Activated CD8-positive, alpha-beta memory T cell treated with anti-CD3 and anti-CD28 coated beads, Interleukin-2, amount 10 ng/mL, durations not matched to agents 7 days and 5 days (primary cell): ENCODE measurements at regions of chr17 and their contacts with region 1.

Region 1: GRCh38 chr17:50169121-50169764 is 3.4 kb downstream of the SGCA start:
- DNase-seq: peak; percentile 75
- ATAC-seq: peak; percentile 74
- H3K4me3 Mint-ChIP-seq: peak overlapping the region; percentile 11
- H3K27ac Mint-ChIP-seq: peak overlapping the region; percentile 47
- H3K4me1 Mint-ChIP-seq: peaks cover 22% of the 10 kb centered on the region
- H3K27me3 Mint-ChIP-seq: no peaks in the 10 kb centered on the region

Region 2: GRCh38 chr17:49968380-49969133 is 200.7 kb before region 1 on chr17:
- CTCF ChIA-PET with region 1: no interaction called
- DNase-seq: peak; percentile 84
- ATAC-seq: peak; percentile 79
- H3K4me3 Mint-ChIP-seq: peak overlapping the region; percentile 76
- H3K27ac Mint-ChIP-seq: peak overlapping the region; percentile 50
- H3K4me1 Mint-ChIP-seq: peaks cover 34% of the 10 kb centered on the region
- H3K27me3 Mint-ChIP-seq: peaks cover 92% of the 10 kb centered on the region

Region 3: DNA sequence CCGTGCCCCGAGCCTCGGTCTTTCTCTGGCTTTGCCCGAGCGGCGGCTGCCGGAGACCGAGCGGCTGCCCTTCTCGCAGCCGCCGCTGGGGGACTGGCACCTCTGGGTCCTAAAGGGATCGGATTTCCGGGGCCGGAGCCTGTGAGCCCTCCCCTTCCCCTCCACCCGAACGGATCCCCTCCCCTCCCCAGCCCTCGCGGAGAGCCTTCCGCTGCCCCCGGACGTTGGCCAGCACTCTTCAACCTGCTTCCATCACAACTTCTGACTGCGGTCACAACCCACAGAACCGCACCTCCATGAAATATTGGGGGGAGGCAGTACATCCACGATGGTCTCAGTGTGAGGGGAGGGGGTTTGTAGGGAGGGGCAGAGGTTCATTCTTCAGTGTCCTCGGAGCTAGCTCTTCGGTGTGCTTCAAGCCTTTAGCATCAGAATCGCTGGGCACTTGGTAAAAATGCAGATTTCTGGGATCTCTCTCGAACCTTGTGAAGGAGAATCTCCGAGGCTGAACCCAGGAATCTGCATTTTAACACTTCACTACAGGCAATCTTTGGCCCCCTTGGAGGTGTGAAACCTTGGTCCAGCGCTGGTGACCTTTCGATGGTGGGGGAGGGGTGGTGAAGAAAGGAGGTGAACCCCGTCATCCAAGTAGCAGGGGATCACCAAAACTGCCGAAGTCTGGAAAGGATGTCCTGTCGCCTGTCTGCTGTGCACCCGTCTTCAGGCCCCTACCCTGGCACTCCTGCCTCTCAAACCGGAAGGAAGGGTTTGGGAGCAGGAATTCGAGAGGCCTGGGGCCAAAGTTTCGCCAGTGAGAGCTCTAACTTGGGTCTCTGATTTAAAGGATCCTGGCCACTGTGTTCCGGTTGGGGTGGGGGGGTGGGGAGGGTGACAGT is 18.0 kb before region 1 on chr17:
- CTCF ChIA-PET with region 1: interaction called, 23 read pairs
- DNase-seq: peak; percentile 96
- ATAC-seq: peak; percentile 81
- H3K4me3 Mint-ChIP-seq: peak overlapping the region; percentile 80
- H3K27ac Mint-ChIP-seq: peak overlapping the region; percentile 96
- H3K4me1 Mint-ChIP-seq: peaks cover 43% of the 10 kb centered on the region
- H3K27me3 Mint-ChIP-seq: no peaks in the 10 kb centered on the region

Region 4: GRCh38 chr17:50206604-50207293 is 37.5 kb after region 1 on chr17:
- CTCF ChIA-PET with region 1: interaction called, 77 read pairs
- DNase-seq: no peak
- ATAC-seq: no peak
- H3K4me3 Mint-ChIP-seq: no peak overlapping the region
- H3K27ac Mint-ChIP-seq: no peak overlapping the region
- H3K4me1 Mint-ChIP-seq: no peaks in the 10 kb centered on the region
- H3K27me3 Mint-ChIP-seq: peaks cover 79% of the 10 kb centered on the region

Region 5: DNA sequence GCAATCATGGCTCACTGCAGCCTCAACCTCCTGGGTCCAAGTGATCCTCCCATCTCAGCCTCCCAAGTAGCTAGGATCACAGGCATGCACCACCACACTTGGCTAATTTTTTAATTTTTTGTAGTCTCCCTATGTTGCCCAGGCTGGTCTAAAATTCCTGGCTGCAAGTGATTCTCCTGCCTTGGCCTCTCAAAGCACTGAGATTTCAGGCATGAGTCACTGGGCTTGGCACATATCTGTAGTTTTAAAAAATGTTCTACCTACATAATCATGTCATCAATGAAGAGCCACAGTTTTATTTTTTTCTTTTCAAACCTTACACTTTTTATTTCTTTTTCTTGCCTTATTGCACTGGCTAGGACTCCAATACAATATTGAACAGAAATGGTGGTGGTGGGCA is 65.3 kb after region 1 on chr17:
- CTCF ChIA-PET with region 1: no interaction called
- DNase-seq: no peak
- ATAC-seq: no peak
- H3K4me3 Mint-ChIP-seq: no peak overlapping the region
- H3K27ac Mint-ChIP-seq: no peak overlapping the region
- H3K4me1 Mint-ChIP-seq: no peaks in the 10 kb centered on the region
- H3K27me3 Mint-ChIP-seq: peaks cover 59% of the 10 kb centered on the region

Region 6: GRCh38 chr17:50297407-50297865 is 128.2 kb after region 1 on chr17:
- CTCF ChIA-PET with region 1: interaction called, 10 read pairs
- DNase-seq: peak; percentile 85
- ATAC-seq: peak; percentile 94
- H3K4me3 Mint-ChIP-seq: no peak overlapping the region
- H3K27ac Mint-ChIP-seq: no peak overlapping the region
- H3K4me1 Mint-ChIP-seq: peaks cover 12% of the 10 kb centered on the region
- H3K27me3 Mint-ChIP-seq: peaks cover 5% of the 10 kb centered on the region